HEK293T (cell line): ENCODE measurements at regions of chr19 and their contacts with region 1.

Region 1: DNA sequence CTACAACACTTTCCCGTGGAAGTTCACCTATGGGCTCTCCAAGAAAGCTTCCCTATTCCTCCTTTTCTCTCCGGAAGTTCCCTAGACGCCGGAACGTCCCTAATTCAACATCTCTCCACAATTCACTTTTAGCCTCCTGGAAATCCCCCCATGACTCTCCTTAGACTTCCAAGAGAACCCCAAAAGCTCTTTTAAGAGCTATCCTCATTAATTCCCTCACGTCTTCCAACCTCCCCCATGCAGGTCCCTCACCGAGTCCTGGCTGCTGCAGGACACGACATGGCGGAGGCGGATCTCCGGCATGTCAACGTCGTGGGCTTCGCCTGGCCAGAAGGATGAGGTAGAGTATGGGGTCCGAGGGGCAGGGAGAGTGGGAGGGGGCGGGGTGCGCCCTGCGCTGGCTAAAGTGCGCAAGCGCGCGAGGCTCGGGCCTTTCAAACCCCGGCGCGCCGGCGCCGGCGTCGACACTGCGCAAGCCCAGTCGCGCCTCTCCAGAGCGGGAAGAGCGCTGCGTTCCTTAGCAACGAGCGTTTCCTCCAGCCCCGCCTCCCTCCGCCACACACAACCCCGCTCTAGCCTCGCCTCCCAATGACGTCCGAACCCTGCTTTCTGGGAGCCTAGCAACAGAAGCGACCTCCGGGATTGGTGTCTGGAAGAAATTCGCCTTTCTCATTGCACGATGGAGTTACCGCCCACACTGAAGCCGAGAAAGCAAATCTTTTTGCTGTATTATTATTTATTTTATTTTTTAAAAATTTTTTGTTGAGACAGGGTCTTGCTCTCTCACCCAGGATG is at the starts of genes PINLYP and XRCC1:
- DNase-seq: peak; percentile 99

Region 2: GRCh38 chr19:43519436-43520088 is 55.8 kb before region 1 on chr19:
- CTCF ChIA-PET with region 1: interaction called, 10 read pairs
- POLR2A ChIA-PET with region 1: no interaction called
- DNase-seq: peak; percentile 77

Region 3: GRCh38 chr19:43562698-43563241 is 12.6 kb before region 1 on chr19:
- CTCF ChIA-PET with region 1: no interaction called
- POLR2A ChIA-PET with region 1: no interaction called
- DNase-seq: no peak

Region 4: DNA sequence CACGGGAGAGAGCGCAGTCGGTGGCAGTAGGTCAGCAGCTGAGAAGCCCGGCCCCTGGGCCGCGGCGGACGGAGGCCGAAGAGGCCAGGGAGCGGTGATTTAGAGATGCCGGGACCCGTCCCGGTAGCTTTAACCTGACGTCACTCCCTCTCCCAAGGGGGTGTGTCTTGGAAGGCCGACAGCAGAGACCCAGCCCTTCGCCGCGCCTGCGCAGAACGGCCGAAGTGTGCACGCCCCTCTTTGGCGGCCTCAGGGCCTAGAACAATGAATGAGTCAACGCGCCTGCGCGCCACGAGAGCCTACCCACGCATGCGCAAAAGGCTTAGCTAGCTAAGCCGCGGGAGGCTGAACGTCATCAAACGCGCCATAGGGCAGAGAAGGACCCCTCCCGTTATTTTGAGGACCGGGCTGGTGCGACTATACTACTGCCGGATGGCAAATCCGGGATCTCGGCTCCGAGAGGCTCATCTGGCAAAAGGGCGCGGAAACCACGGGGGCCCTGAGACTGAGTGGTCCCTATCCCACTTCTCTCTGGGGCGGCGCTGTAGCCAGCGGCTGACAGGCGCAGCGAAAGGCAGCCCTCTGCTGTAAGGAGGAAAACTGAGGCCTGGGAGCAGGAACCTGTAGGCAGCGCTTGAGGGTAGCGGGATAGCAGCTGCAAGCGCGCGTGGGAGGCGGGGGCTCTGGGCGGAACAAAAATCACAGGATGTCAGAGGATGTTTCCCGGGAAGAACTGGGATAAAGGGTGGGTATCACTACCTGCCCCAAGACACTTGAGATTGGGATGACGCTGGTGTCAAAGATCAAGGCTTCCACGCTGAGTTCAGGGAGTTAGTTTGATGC is 20.9 kb after region 1 on chr19 and contains the starts of genes IRGQ and ZNF576:
- CTCF ChIA-PET with region 1: no interaction called
- POLR2A ChIA-PET with region 1: interaction called, 16 read pairs
- DNase-seq: peak; percentile 99

Region 5: DNA sequence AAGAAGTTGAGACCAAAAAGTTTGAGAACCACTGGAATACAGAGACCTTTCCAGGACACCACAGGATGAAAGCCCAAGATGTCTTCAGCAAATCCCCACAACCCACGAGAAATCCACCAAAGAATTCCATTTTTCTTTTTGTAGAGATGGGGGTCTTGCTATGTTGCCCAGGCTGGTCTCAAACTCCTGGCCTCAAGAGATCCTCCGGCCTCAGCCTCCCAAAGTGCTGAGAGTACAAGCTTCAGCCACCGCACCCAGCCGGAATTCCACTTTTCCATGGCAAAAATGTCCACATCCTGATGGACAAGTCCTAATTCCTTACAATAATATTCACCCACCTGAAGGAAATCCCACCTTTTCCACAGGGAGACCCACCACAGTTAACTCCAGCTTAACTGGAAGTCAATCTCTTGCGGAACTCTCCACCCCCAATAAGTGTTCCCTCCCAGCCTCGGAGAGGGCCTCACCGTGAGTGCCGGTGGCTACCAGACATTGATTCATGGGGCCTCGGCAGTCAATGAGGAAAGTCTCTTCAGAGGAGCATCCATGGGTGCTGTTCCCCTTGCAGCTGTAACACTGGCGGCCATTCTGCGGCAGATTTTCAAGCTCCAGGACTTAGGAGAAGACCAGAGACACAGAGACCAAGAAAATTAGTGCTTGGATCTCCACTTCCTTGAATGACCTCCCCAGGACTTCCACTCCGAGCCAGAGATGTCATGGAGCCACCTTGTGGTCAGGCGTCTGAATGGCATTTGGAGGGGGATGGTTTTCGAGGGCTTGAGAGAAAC is 76.6 kb after region 1 on chr19:
- CTCF ChIA-PET with region 1: interaction called, 10 read pairs
- POLR2A ChIA-PET with region 1: no interaction called
- DNase-seq: peak; percentile 76